Activated T-helper 1 cell treated with anti-CD3 and anti-CD28 coated beads, Interleukin-12 subunit alpha, Interleukin-12 subunit beta, Interleukin-2, Interleukin-4 antibody, amounts not matched to agents 30 ng/mL and 10 ng/mL and 1 ng/mL, durations not matched to agents 14 hours and 24 hours and 36 hours (primary cell): ENCODE measurements at regions of chr10 and their contacts with region 1.

Region 1: GRCh38 chr10:31031558-31032257 is at the start of gene ZNF438:
- DNase-seq: peak; percentile 93
- H3K4me3 Mint-ChIP-seq: peak within 1 kb of the TSS; percentile 88
- H3K27ac Mint-ChIP-seq: peak within 1 kb of the TSS; percentile 99
- H3K4me1 Mint-ChIP-seq: peaks cover 25% of the 10 kb centered on the region
- H3K27me3 Mint-ChIP-seq: no peaks in the 10 kb centered on the region
- total RNA-seq, gene ZNF438: 2.4 and 2.6 TPM in 2 replicates

Region 2: GRCh38 chr10:30783939-30784500 is 247.7 kb before region 1 on chr10:
- intact Hi-C with region 1: loop called (anchors 2 kb)
- DNase-seq: peak; percentile 67
- H3K4me3 Mint-ChIP-seq: peak overlapping the region; percentile 79
- H3K27ac Mint-ChIP-seq: peak overlapping the region; percentile 75
- H3K4me1 Mint-ChIP-seq: peaks cover 29% of the 10 kb centered on the region
- H3K27me3 Mint-ChIP-seq: peaks cover 7% of the 10 kb centered on the region

Region 3: DNA sequence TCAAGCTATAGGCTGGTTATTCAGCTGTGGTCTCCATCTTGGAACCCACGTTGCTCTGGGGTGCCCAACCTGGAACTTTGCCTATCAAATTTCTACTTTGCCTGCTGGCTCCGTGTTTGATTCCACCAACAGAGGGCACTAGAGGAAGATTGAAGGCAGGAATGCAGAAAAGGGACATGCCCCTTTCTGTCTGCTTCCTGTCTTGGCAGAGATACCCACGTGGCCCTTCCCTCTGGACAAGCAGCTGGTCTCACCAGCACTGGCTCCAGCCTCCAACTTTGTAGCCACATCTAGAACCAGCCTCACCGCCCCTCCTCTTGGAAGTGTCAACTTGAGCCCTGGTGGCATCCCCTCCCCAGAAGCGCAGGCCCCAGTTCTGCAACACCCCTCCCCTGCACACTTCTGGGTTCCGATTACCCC is 52.1 kb after region 1 on chr10:
- intact Hi-C with region 1: loop called (anchors 2 kb)
- DNase-seq: peak; percentile 58
- H3K4me3 Mint-ChIP-seq: no peak overlapping the region
- H3K27ac Mint-ChIP-seq: peak overlapping the region; percentile 11
- H3K4me1 Mint-ChIP-seq: peaks cover 24% of the 10 kb centered on the region
- H3K27me3 Mint-ChIP-seq: peaks cover 4% of the 10 kb centered on the region

Region 4: GRCh38 chr10:31318854-31319601 is 287.3 kb after region 1 on chr10 and contains the start of gene ZEB1:
- intact Hi-C with region 1: loop called (anchors 1 kb)
- DNase-seq: peak; percentile 86
- H3K4me3 Mint-ChIP-seq: peak within 1 kb of the TSS; percentile 97
- H3K27ac Mint-ChIP-seq: peak within 1 kb of the TSS; percentile 100
- H3K4me1 Mint-ChIP-seq: peaks cover 60% of the 10 kb centered on the region
- H3K27me3 Mint-ChIP-seq: no peaks in the 10 kb centered on the region
- total RNA-seq, gene ZEB1: 70.8 and 79.8 TPM in 2 replicates

Region 5: DNA sequence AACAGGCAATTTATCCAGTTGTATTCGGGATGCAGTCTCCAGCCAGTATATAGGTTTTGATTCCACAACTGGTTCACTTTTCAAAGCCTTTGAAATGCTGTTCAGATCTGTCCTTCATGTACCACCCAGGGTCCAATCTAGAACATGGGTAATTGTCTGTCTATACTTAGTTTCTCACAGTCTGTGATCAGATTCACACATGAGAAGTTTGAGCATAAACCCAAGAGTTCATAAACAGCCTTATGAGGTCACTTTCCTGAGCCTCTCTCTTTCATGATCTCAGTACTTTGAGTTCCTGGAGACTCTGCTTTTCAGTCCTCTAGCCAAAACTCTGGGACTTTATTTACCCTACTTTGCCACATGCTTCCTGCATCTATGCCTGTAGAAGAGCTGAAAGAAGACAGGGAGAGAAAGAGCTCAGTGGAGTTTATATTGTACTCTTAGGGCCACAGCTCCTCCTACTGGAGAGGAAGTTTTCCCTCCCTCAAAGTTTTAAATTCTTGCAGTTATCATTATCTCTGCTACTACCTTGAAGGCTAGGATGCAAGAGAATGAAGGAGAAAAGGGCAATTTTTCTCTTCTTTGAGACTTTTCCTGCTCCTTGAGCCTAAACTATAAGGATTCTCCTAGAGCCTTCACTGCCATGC is 459.3 kb after region 1 on chr10:
- intact Hi-C with region 1: loop called (anchors 5 kb)
- DNase-seq: no peak
- H3K4me3 Mint-ChIP-seq: no peak overlapping the region
- H3K27ac Mint-ChIP-seq: no peak overlapping the region
- H3K4me1 Mint-ChIP-seq: peaks cover 19% of the 10 kb centered on the region
- H3K27me3 Mint-ChIP-seq: no peaks in the 10 kb centered on the region

Region 6: GRCh38 chr10:31759799-31760626 is 728.3 kb after region 1 on chr10:
- intact Hi-C with region 1: loop called (anchors 1 kb)
- DNase-seq: peak; percentile 92
- H3K4me3 Mint-ChIP-seq: peak overlapping the region; percentile 83
- H3K27ac Mint-ChIP-seq: peak overlapping the region; percentile 89
- H3K4me1 Mint-ChIP-seq: peaks cover 28% of the 10 kb centered on the region
- H3K27me3 Mint-ChIP-seq: peaks cover 5% of the 10 kb centered on the region